ENCODE measurements at regions of chr9 and their contacts with region 1.

Region 1: GRCh38 chr9:33167046-33167808 is at the start of gene B4GALT1:
- DNase-seq: peak; percentile 90 to 99 (median 97)
- ATAC-seq: peak; percentile 77
- H3K4me3 ChIP-seq: peak within 1 kb of the TSS; percentile 85
- H3K4me3 Mint-ChIP-seq: peak within 1 kb of the TSS; percentile 93
- H3K27ac ChIP-seq: peak within 1 kb of the TSS; percentile 89 to 94
- H3K27ac Mint-ChIP-seq: peak within 1 kb of the TSS; percentile 97
- H3K4me1 ChIP-seq: peaks cover 54% of the 10 kb centered on the region
- H3K4me1 Mint-ChIP-seq: peaks cover 61% of the 10 kb centered on the region
- H3K27me3 ChIP-seq: no peaks in the 10 kb centered on the region
- H3K27me3 Mint-ChIP-seq: no peaks in the 10 kb centered on the region
- CTCF ChIP-seq: no peak
- total RNA-seq, gene B4GALT1: 74.7 to 77.0 TPM

Region 2: DNA sequence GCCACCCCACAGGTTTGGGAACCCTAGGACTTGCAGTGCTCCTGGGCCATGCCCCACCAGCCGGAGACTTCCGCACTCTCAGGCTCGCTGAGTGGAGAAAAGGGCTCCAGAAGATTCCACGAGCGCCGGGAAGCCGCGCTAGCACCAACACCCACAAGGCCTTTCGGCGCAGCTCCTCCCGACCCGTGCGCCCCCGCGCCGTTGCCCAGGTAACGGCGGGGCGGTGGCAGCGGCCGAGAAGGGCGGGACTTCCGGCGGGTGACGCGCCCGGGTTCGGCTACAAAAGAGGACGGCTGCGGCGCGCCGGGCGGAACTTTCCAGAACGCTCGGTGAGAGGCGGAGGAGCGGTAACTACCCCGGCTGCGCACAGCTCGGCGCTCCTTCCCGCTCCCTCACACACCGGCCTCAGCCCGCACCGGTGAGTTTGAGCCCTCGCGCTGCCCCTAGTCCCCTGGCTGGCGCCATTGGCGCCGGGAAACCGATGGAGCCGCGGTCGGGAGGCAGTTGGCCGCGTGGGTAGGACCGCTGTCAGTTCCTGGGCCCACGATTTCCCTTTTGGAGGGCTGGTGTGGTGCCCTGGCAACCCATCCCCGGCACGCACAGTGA is 142.2 kb before region 1 on chr9 and contains the start of gene DNAJA1:
- CTCF ChIA-PET with region 1: interaction called, 3 read pairs
- POLR2A ChIA-PET with region 1: interaction called, 14 read pairs
- intact Hi-C with region 1: loop called in 1 of 2 experiments (anchors 2 kb)
- DNase-seq: peak; percentile 90 to 98 (median 96)
- ATAC-seq: peak; percentile 83
- H3K4me3 ChIP-seq: peak within 1 kb of the TSS; percentile 90
- H3K4me3 Mint-ChIP-seq: peak within 1 kb of the TSS; percentile 96
- H3K27ac ChIP-seq: peak within 1 kb of the TSS; percentile 99 to 100
- H3K27ac Mint-ChIP-seq: peak within 1 kb of the TSS; percentile 93
- H3K4me1 ChIP-seq: peaks cover 43% of the 10 kb centered on the region
- H3K4me1 Mint-ChIP-seq: peaks cover 73% of the 10 kb centered on the region
- H3K27me3 ChIP-seq: no peaks in the 10 kb centered on the region
- H3K27me3 Mint-ChIP-seq: no peaks in the 10 kb centered on the region
- CTCF ChIP-seq: no peak
- total RNA-seq, gene DNAJA1: 150 to 156 TPM

Region 3: GRCh38 chr9:33116860-33117259 is 50.4 kb before region 1 on chr9:
- CTCF ChIA-PET with region 1: interaction called, 8 read pairs
- POLR2A ChIA-PET with region 1: no interaction called
- intact Hi-C with region 1: loop called in 1 of 2 experiments (anchors 10 kb)
- DNase-seq: no peak
- ATAC-seq: no peak
- H3K4me3 ChIP-seq: no peak overlapping the region
- H3K4me3 Mint-ChIP-seq: no peak overlapping the region
- H3K27ac ChIP-seq: no peak overlapping the region
- H3K27ac Mint-ChIP-seq: peak overlapping the region; percentile 55
- H3K4me1 ChIP-seq: peaks cover 18% of the 10 kb centered on the region
- H3K4me1 Mint-ChIP-seq: peaks cover 41% of the 10 kb centered on the region
- H3K27me3 ChIP-seq: no peaks in the 10 kb centered on the region
- H3K27me3 Mint-ChIP-seq: no peaks in the 10 kb centered on the region
- CTCF ChIP-seq: no peak

Region 4: DNA sequence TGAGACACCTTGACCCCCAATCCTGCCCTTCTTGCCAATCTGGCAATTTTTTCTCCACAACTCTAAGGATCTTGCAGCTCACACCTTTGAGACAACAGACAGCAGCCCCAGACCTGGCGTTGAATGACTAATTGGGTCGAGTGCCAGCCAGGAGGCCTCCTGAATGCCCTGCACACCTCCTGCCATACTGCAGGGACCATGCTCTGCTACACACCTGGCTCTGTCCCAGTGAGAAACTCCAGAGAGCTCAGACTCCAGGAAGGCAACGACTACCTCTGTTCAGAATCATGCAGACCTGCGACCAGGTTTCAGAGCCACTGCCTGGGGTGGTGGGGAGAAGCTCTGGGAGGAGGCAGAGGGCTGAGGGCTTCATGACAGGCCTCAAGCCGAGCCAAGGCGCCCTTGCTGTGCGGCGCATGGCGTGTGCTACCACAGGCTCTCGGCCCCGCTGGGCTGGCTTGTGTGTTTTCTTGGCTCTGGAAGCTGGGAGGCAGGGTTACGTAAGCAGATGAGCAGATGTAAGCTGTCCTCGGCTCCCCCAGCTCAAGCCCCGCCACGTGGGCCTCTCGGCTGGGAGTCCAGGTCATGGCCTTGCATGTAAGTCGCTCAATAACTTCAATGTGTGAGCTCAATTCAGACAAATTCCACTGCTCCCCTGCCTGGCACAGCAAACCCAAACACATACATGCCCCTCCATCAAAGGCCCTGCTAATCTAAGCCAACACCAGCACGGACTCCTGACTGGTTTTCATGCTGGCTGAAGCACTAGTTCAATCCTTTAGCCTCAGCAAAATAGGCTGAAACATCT is 27.6 kb before region 1 on chr9:
- CTCF ChIA-PET with region 1: no interaction called
- POLR2A ChIA-PET with region 1: interaction called, 40 read pairs
- intact Hi-C with region 1: loop called in 1 of 2 experiments (anchors 5 kb)
- DNase-seq: no peak
- ATAC-seq: no peak
- H3K4me3 ChIP-seq: no peak overlapping the region
- H3K4me3 Mint-ChIP-seq: peak overlapping the region; percentile 58
- H3K27ac ChIP-seq: peak overlapping the region in 1 of 2 donors; percentile 67
- H3K27ac Mint-ChIP-seq: peak overlapping the region; percentile 67
- H3K4me1 ChIP-seq: peaks cover 94% of the 10 kb centered on the region
- H3K4me1 Mint-ChIP-seq: peaks cover 77% of the 10 kb centered on the region
- H3K27me3 ChIP-seq: no peaks in the 10 kb centered on the region
- H3K27me3 Mint-ChIP-seq: no peaks in the 10 kb centered on the region
- CTCF ChIP-seq: no peak

Region 5: GRCh38 chr9:33211695-33212393 is 44.6 kb after region 1 on chr9:
- CTCF ChIA-PET with region 1: no interaction called
- POLR2A ChIA-PET with region 1: no interaction called
- intact Hi-C with region 1: no loop called
- DNase-seq: no peak
- ATAC-seq: no peak
- H3K4me3 ChIP-seq: no peak overlapping the region
- H3K4me3 Mint-ChIP-seq: no peak overlapping the region
- H3K27ac ChIP-seq: no peak overlapping the region
- H3K27ac Mint-ChIP-seq: no peak overlapping the region
- H3K4me1 ChIP-seq: no peaks in the 10 kb centered on the region
- H3K4me1 Mint-ChIP-seq: no peaks in the 10 kb centered on the region
- H3K27me3 ChIP-seq: no peaks in the 10 kb centered on the region
- H3K27me3 Mint-ChIP-seq: no peaks in the 10 kb centered on the region
- CTCF ChIP-seq: no peak

Region 6: DNA sequence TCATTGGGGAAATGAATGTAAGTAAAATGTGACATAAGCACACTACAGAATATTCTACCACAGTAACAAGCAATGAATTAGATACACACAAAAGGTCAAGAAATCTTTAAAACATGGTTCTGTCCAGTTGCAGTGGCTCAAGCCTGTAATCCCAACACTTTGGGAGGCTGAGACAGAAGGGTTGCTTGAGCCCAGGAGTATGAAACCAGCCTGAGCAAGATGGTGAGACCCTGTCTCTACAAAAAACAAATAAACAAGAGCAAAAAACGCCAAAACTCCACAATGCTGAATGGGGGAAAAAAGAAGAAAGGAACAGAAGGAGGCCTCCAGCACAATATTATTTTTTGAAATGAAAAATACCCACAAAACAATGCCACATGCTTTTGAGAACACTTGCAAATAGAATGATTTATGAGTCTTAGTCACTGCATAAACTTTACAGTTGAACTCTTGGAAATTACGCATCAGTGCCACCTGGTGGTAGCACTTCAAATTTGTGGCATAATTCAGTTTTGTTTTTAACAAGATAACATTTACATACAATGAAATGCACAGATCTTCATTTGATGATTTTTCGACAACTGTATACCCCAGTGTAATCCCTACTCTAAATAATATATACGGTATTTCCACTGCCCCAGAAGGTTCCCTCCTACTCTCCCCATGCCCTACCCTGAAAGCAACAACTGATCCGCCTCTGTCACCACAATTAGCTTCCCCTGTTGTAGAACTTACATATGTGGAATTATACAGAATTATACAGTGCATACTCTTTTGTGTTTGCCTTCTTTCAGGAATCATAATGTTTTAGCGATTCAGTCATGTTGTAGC is 58.3 kb after region 1 on chr9:
- CTCF ChIA-PET with region 1: interaction called, 6 read pairs
- POLR2A ChIA-PET with region 1: no interaction called
- intact Hi-C with region 1: loop called (anchors 2 to 5 kb)
- DNase-seq: peak; percentile 42 to 85 (median 64)
- ATAC-seq: peak; percentile 86
- H3K4me3 ChIP-seq: no peak overlapping the region
- H3K4me3 Mint-ChIP-seq: no peak overlapping the region
- H3K27ac ChIP-seq: no peak overlapping the region
- H3K27ac Mint-ChIP-seq: peak overlapping the region; percentile 2
- H3K4me1 ChIP-seq: peaks cover 10% of the 10 kb centered on the region
- H3K4me1 Mint-ChIP-seq: peaks cover 9% of the 10 kb centered on the region
- H3K27me3 ChIP-seq: no peaks in the 10 kb centered on the region
- H3K27me3 Mint-ChIP-seq: no peaks in the 10 kb centered on the region
- CTCF ChIP-seq: peak; percentile 90

Region 7: GRCh38 chr9:33290247-33291030 is 123.2 kb after region 1 on chr9 and contains the start of gene NFX1:
- CTCF ChIA-PET with region 1: no interaction called
- POLR2A ChIA-PET with region 1: interaction called, 30 read pairs
- intact Hi-C with region 1: no loop called
- DNase-seq: peak; percentile 95 to 100 (median 98)
- ATAC-seq: peak; percentile 79
- H3K4me3 ChIP-seq: peak within 1 kb of the TSS; percentile 92
- H3K4me3 Mint-ChIP-seq: peak within 1 kb of the TSS; percentile 88
- H3K27ac ChIP-seq: peak within 1 kb of the TSS; percentile 99 to 100
- H3K27ac Mint-ChIP-seq: peak within 1 kb of the TSS; percentile 99
- H3K4me1 ChIP-seq: peaks cover 55% of the 10 kb centered on the region
- H3K4me1 Mint-ChIP-seq: peaks cover 62% of the 10 kb centered on the region
- H3K27me3 ChIP-seq: no peaks in the 10 kb centered on the region
- H3K27me3 Mint-ChIP-seq: no peaks in the 10 kb centered on the region
- CTCF ChIP-seq: no peak
- total RNA-seq, gene NFX1: 33.1 to 34.1 TPM

Measured in CD4-positive, alpha-beta T cell (primary cell).